ENCODE measurements at regions of chr2 and their contacts with region 1.

Region 1: DNA sequence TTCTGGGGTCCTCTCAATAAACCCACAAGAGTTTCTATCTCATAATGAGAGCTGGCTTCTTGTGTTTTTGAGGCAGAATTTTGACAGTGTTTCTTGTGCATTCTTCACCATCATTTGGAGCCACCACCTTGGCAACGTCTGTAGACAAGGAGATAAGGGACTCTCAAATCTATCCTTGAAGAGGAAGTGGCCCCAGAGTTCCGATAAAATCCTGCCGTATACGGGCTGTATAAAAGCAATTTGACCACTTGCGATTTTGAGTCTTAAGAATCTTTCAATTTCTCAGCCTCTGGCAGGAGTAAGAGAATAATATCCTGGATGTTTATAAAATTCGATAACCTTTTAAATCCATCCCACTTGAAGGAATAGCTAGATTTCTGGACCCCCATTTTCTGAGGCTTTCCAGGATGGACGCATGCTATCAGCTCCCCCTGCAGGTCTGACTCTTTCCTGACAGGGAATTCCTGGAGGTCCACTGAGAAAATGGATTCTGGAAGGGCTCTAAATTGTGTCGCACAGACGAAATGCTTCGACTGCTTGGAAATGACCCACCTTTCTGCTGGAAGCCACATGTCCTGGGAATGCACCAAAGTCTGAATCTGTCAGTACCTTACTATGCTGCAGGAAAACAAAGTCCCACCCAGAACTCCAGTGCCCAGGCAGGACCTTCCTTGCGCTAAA is 54.1 kb downstream of the E2F6 start:
- DNase-seq: peak in 1 of 2 donors; percentile 58
- ATAC-seq: peak; percentile 82
- H3K4me3 ChIP-seq: peak overlapping the region; percentile 62 to 78
- H3K27ac ChIP-seq: no peak overlapping the region
- H3K4me1 ChIP-seq: peaks cover 2 to 5% of the 10 kb centered on the region in 2 donors
- H3K27me3 ChIP-seq: no peaks in the 10 kb centered on the region

Region 2: DNA sequence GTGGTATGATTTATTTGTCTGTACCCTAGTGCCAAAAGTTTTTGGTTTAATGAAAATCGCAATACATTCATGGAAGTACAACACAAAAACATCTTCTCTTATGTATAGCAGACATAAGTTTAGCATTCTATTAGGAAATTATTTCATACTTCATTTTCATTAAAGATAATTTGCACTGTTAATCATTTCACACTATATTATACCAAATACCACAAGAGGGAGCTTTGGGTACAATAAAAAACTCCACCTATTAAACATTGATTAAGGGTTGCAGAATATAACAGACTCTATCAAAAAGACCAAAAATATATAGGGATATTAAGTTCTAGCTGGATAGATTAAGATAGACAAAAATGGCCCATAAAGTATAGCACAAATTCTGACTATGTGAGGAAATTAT is 177.6 kb before region 1 on chr2:
- intact Hi-C with region 1: loop called (anchors 1 to 2 kb)
- DNase-seq: no peak
- ATAC-seq: peak; percentile 59
- H3K4me3 ChIP-seq: no peak overlapping the region
- H3K27ac ChIP-seq: no peak overlapping the region
- H3K4me1 ChIP-seq: no peaks in the 10 kb centered on the region
- H3K27me3 ChIP-seq: no peaks in the 10 kb centered on the region

Region 3: GRCh38 chr2:11370377-11371091 is 41.4 kb before region 1 on chr2:
- intact Hi-C with region 1: loop called in 1 of 2 experiments (anchors 5 kb)
- DNase-seq: no peak
- ATAC-seq: no peak
- H3K4me3 ChIP-seq: no peak overlapping the region
- H3K27ac ChIP-seq: no peak overlapping the region
- H3K4me1 ChIP-seq: peaks cover 0 to 3% of the 10 kb centered on the region in 2 donors
- H3K27me3 ChIP-seq: no peaks in the 10 kb centered on the region

Region 4: GRCh38 chr2:11421863-11422490 is 10.1 kb after region 1 on chr2:
- intact Hi-C with region 1: no loop called
- DNase-seq: no peak
- ATAC-seq: no peak
- H3K4me3 ChIP-seq: no peak overlapping the region
- H3K27ac ChIP-seq: no peak overlapping the region
- H3K4me1 ChIP-seq: no peaks in the 10 kb centered on the region
- H3K27me3 ChIP-seq: no peaks in the 10 kb centered on the region

Region 5: GRCh38 chr2:11738589-11739436 is 326.9 kb after region 1 on chr2:
- intact Hi-C with region 1: no loop called
- DNase-seq: peak; percentile 88 to 90
- ATAC-seq: peak; percentile 86
- H3K4me3 ChIP-seq: no peak overlapping the region
- H3K27ac ChIP-seq: no peak overlapping the region
- H3K4me1 ChIP-seq: no peaks in the 10 kb centered on the region
- H3K27me3 ChIP-seq: no peaks in the 10 kb centered on the region

Measured in aorta (tissue), 5 donors.